ENCODE measurements at regions of chr15 and their contacts with region 1.

Region 1: DNA sequence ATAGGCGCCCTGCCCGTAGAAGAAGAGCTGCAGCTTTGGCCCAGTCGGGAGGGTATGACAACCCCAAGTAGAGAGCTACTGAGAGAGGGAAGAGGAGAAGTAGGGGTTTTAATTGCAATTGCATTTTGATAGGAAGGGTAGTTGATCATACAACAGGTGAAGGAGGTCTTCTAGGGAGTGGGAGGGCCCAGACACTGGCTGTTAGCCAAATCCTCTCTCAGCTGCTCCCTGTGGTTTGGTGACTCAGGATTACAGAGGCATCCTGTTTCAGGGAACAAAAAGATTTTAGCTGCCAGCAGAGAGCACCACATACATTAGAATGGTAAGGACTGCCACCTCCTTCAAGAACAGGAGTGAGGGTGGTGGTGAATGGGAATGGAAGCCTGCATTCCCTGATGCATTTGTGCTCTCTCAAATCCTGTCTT is 408.9 kb upstream of the THBS1 start:
- DNase-seq: peak; percentile 71
- H3K4me3 ChIP-seq: no peak overlapping the region
- H3K4me3 Mint-ChIP-seq: no peak overlapping the region
- H3K27ac Mint-ChIP-seq: peak overlapping the region; percentile 19
- H3K4me1 ChIP-seq: peaks cover 16% of the 10 kb centered on the region
- H3K4me1 Mint-ChIP-seq: peaks cover 19% of the 10 kb centered on the region
- H3K27me3 ChIP-seq: no peaks in the 10 kb centered on the region
- H3K27me3 Mint-ChIP-seq: no peaks in the 10 kb centered on the region
- CTCF ChIP-seq: peak in 1 of 2 experiments; percentile 28

Region 2: DNA sequence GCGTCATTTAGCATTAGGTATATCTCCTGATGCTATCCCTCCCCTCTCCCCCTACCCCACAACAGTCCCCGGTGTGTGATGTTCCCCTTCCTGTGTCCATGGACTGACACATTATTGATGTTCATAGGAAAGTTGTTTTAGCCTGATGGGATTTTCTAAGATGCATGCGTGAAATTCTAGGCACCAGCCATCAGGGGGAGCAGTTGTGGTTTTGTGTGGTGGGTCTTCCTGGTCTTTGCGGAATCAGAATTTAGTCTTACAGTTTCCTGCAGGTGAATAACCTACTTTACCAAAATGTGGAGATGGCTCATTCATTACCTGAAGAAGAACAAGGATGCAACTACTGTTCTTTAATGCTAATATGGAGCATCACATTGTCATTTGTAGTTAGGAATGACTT is 46.1 kb before region 1 on chr15:
- CTCF ChIA-PET with region 1: no interaction called
- POLR2A ChIA-PET with region 1: no interaction called
- intact Hi-C with region 1: loop called (anchors 2 kb)
- DNase-seq: peak in 1 of 2 experiments; percentile 52
- H3K4me3 ChIP-seq: no peak overlapping the region
- H3K4me3 Mint-ChIP-seq: no peak overlapping the region
- H3K27ac Mint-ChIP-seq: no peak overlapping the region
- H3K4me1 ChIP-seq: peaks cover 37% of the 10 kb centered on the region
- H3K4me1 Mint-ChIP-seq: peaks cover 22% of the 10 kb centered on the region
- H3K27me3 ChIP-seq: no peaks in the 10 kb centered on the region
- H3K27me3 Mint-ChIP-seq: no peaks in the 10 kb centered on the region
- CTCF ChIP-seq: peak; percentile 57 to 65

Region 3: GRCh38 chr15:39194106-39194830 is 22.3 kb after region 1 on chr15:
- CTCF ChIA-PET with region 1: no interaction called
- POLR2A ChIA-PET with region 1: no interaction called
- intact Hi-C with region 1: no loop called
- DNase-seq: no peak
- H3K4me3 ChIP-seq: no peak overlapping the region
- H3K4me3 Mint-ChIP-seq: no peak overlapping the region
- H3K27ac Mint-ChIP-seq: no peak overlapping the region
- H3K4me1 ChIP-seq: peaks cover 22% of the 10 kb centered on the region
- H3K4me1 Mint-ChIP-seq: peaks cover 28% of the 10 kb centered on the region
- H3K27me3 ChIP-seq: no peaks in the 10 kb centered on the region
- H3K27me3 Mint-ChIP-seq: no peaks in the 10 kb centered on the region
- CTCF ChIP-seq: no peak

Region 4: DNA sequence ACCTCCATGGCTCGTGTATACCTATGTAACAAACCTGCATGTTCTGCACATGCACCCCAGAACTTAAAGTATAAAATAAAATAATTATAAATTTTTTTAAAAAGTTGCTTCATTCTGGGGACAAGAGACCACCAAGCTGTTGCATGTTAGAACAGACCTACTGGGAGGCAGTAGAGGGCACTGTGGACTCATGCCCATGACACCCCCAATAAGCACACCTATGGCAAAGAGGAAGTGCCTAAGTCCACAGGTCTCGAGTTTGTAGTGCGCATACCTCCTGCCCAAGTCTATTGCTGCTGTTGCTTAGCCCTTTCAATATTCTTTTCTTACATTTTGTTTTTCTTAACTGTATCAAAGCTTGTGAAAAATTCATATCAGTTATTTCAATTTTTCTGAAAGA is 141.0 kb after region 1 on chr15:
- CTCF ChIA-PET with region 1: no interaction called
- POLR2A ChIA-PET with region 1: no interaction called
- intact Hi-C with region 1: loop called (anchors 5 kb)
- DNase-seq: peak; percentile 16 to 35
- H3K4me3 ChIP-seq: no peak overlapping the region
- H3K4me3 Mint-ChIP-seq: no peak overlapping the region
- H3K27ac Mint-ChIP-seq: no peak overlapping the region
- H3K4me1 ChIP-seq: peaks cover 5% of the 10 kb centered on the region; the same call in 1 of the 2 replicates
- H3K4me1 Mint-ChIP-seq: no peaks in the 10 kb centered on the region
- H3K27me3 ChIP-seq: no peaks in the 10 kb centered on the region
- H3K27me3 Mint-ChIP-seq: no peaks in the 10 kb centered on the region
- CTCF ChIP-seq: peak in 1 of 2 experiments; percentile 25

Region 5: GRCh38 chr15:39438799-39439592 is 267.0 kb after region 1 on chr15:
- CTCF ChIA-PET with region 1: interaction called, 5 read pairs
- POLR2A ChIA-PET with region 1: no interaction called
- intact Hi-C with region 1: loop called (anchors 1 kb)
- DNase-seq: peak; percentile 44 to 48
- H3K4me3 ChIP-seq: no peak overlapping the region
- H3K4me3 Mint-ChIP-seq: no peak overlapping the region
- H3K27ac Mint-ChIP-seq: no peak overlapping the region
- H3K4me1 ChIP-seq: peaks cover 26% of the 10 kb centered on the region
- H3K4me1 Mint-ChIP-seq: peaks cover 24% of the 10 kb centered on the region
- H3K27me3 ChIP-seq: no peaks in the 10 kb centered on the region
- H3K27me3 Mint-ChIP-seq: no peaks in the 10 kb centered on the region
- CTCF ChIP-seq: peak; percentile 28 to 47